PC-9 (cell line): ENCODE measurements at regions of chr17 and their contacts with region 1.

Region 1: DNA sequence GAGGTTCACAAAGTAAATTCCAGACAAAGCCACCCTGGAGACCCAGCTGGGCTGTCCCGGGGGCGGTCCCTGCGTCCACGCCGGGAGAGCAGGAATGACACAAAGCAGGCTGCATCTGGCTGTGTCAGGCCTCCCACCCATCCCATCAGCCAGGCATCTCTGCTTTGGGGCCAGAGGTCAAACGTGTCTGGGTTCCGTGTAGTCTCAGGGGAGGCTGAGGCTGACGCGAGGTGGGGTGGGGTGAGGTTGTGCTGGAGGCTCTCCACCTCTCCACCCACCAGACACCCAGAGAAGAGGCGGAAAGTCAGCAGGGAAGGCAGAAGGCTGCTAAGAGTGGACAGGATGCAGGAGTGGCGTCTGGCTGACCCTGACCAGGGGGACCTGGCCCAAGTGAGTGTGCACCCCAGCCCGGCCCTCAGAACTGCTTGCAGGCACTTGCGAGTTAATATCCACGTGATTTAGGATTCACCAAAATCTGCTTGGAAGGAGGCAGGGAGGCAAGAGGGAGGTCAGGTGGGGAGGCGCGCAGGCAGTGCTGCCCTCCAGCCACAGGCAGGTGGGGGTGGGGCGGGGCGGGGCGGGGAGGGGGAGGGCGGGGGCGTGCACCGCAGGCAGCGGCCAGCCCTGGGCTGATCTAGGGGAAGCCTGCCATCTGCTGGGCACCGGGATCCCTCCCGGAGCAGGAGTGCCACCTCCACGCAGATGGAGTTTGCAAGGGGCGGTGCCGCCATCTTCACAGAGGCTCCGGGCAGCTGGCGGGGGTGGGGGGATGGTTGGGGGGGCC is 44.3 kb downstream of the TBC1D16 start:
- DNase-seq: peak; percentile 48 to 81
- H3K4me3 ChIP-seq: no peak overlapping the region
- H3K27ac ChIP-seq: no peak overlapping the region
- H3K4me1 ChIP-seq: peaks cover 45% of the 10 kb centered on the region
- H3K27me3 ChIP-seq: no peaks in the 10 kb centered on the region
- CTCF ChIP-seq: peak; percentile 41; the same call in 1 of the 2 replicates

Region 2: DNA sequence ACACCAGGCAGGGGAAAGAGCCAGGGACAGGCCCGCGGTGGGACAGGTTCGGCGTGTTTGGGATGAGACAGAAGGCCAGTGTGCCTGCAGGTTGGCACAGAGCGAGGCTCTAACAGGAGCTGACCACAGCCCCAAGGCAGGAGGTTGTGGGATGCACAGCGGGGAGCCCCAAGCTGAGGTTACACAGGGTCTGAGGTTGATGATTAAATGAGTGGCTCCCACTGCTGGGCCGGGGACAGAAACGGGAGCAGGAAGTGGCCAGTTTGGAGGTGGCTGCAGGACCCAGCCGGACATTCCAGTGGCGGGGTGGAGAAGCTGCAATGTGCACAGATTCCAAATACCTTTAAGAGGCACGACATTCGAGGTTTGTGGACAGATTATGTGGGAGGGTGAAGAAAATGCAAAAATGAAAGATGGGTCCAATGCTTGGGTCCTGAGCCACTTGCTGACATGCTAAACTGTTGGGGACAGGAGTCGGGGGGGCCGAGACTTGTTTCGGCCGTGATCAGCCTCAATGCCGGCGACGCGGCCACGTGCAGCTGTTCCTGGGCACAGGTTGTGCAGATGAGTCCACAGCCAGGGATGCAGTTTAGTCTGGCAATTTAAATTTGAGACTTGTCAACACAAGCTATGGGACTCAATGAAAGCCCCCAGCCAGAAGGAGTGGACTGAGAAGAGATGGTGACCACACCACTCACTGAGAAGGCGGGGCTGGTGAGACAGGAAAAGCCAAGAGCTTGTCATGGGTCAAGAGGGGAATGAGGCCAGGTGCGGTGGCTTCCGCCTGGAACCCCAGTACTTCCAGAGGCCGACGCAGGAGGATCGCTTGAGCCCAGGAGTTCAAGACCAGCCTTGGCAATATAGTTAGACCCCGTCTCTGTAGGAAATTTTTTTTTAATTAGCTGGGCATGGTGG is 251.9 kb before region 1 on chr17:
- CTCF ChIA-PET with region 1: no interaction called
- POLR2A ChIA-PET with region 1: no interaction called
- intact Hi-C with region 1: loop called (anchors 2 kb)
- DNase-seq: peak; percentile 91 to 93
- H3K4me3 ChIP-seq: no peak overlapping the region
- H3K27ac ChIP-seq: peak overlapping the region; percentile 56
- H3K4me1 ChIP-seq: peaks cover 34% of the 10 kb centered on the region
- H3K27me3 ChIP-seq: no peaks in the 10 kb centered on the region
- CTCF ChIP-seq: no peak

Region 3: GRCh38 chr17:79810130-79811010 is 181.0 kb before region 1 on chr17:
- CTCF ChIA-PET with region 1: interaction called, 6 read pairs
- POLR2A ChIA-PET with region 1: interaction called, 3 read pairs
- intact Hi-C with region 1: loop called (anchors 2 kb)
- DNase-seq: peak; percentile 68 to 76
- H3K4me3 ChIP-seq: peak overlapping the region; percentile 54; the same call in 1 of the 2 replicates
- H3K27ac ChIP-seq: no peak overlapping the region
- H3K4me1 ChIP-seq: peaks cover 39% of the 10 kb centered on the region; the same call in 1 of the 2 replicates
- H3K27me3 ChIP-seq: peaks cover 3% of the 10 kb centered on the region; the same call in 1 of the 2 replicates
- CTCF ChIP-seq: no peak

Region 4: GRCh38 chr17:79839363-79840268 is 151.7 kb before region 1 on chr17 and contains the start of gene CBX4:
- CTCF ChIA-PET with region 1: interaction called, 3 read pairs
- POLR2A ChIA-PET with region 1: no interaction called
- intact Hi-C with region 1: loop called (anchors 2 kb)
- DNase-seq: peak; percentile 71 to 93
- H3K4me3 ChIP-seq: peak within 1 kb of the TSS; percentile 86
- H3K27ac ChIP-seq: peak within 1 kb of the TSS; percentile 83
- H3K4me1 ChIP-seq: peaks cover 15% of the 10 kb centered on the region
- H3K27me3 ChIP-seq: peaks cover 4% of the 10 kb centered on the region; the same call in 1 of the 2 replicates
- CTCF ChIP-seq: peak; percentile 83
- total RNA-seq, gene CBX4: 32.0 and 33.1 TPM in 2 replicates

Region 5: GRCh38 chr17:79850571-79851461 is 140.5 kb before region 1 on chr17:
- CTCF ChIA-PET with region 1: no interaction called
- POLR2A ChIA-PET with region 1: no interaction called
- intact Hi-C with region 1: loop called (anchors 5 kb)
- DNase-seq: peak; percentile 79 to 92
- H3K4me3 ChIP-seq: no peak overlapping the region
- H3K27ac ChIP-seq: peak overlapping the region; percentile 59
- H3K4me1 ChIP-seq: peaks cover 20% of the 10 kb centered on the region
- H3K27me3 ChIP-seq: no peaks in the 10 kb centered on the region
- CTCF ChIP-seq: no peak

Region 6: DNA sequence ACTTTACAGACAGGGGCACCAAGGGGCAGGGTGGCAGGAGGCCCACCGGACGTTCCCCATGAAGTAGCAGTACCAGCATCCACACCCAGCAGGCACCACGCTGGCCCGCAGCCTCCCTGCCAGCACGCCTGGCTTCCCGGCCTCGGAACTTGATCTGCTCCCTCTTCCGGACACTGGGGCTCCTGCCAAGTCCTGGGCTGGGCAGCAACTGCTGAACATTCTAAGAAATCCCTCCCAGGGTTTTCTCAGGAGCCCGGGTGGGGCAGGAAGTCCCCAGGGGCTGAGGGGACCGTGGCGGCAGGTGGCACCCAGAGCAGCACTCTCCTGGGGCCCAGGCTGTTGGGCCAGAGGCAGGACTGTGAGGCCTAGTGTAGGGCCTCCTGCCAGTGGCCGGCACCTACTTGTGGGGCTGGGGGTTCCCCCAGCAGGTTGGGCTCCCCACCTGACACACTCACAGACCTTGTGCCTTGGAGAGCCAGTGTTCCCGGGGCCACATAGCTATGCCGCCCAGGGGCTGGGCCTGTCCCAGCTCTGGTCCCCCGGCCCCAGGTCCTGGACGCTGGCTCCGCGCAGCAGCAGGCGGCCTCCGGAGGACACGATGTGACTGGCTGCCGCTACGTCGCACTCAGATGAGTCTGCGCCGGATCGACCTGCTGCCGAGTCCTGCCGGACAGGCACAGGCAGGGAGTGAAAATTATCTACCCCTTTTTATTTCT is 65.9 kb before region 1 on chr17:
- CTCF ChIA-PET with region 1: no interaction called
- POLR2A ChIA-PET with region 1: no interaction called
- intact Hi-C with region 1: loop called (anchors 5 kb)
- DNase-seq: peak; percentile 57 to 86
- H3K4me3 ChIP-seq: no peak overlapping the region
- H3K27ac ChIP-seq: no peak overlapping the region
- H3K4me1 ChIP-seq: no peaks in the 10 kb centered on the region; the same call in 1 of the 2 replicates
- H3K27me3 ChIP-seq: no peaks in the 10 kb centered on the region
- CTCF ChIP-seq: no peak

Region 7: DNA sequence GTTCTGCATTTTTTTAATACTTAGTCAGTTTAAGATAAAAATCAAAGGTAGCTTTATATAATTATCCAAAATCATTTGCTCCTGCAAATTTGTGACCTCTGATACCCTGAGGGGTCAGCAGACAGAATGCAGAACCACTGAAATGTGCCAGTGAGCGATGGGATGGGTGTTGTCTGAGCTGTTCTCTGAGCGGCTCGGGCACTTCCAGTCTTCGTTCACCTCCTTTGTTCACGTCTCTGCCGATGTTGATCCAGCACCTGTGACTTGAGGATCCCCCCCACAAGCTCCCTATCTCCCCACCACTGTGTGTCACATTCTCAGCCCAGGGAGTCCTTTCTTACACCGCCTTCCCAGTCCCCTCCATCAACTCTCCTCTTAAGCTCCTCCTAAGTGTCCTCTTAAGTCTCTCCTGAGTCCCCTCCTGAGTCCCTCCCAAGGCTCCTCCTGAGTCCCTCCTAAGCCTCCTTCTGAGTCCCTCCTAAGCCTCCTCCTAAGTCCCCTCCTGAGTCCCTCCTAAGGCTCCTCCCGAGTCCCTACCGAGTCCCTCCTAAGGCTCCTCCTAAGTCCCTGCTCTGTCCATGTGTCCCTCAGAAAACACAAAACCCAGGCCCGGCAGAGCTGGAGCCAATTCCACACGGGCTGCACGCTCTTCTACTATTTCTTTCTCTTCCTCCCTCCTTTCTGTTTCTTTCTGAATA is 316.8 kb after region 1 on chr17:
- CTCF ChIA-PET with region 1: no interaction called
- POLR2A ChIA-PET with region 1: no interaction called
- intact Hi-C with region 1: no loop called
- DNase-seq: no peak
- H3K4me3 ChIP-seq: no peak overlapping the region
- H3K27ac ChIP-seq: no peak overlapping the region
- H3K4me1 ChIP-seq: no peaks in the 10 kb centered on the region
- H3K27me3 ChIP-seq: no peaks in the 10 kb centered on the region
- CTCF ChIP-seq: no peak